ENCODE measurements at regions of chr1 and their contacts with region 1.

Region 1: DNA sequence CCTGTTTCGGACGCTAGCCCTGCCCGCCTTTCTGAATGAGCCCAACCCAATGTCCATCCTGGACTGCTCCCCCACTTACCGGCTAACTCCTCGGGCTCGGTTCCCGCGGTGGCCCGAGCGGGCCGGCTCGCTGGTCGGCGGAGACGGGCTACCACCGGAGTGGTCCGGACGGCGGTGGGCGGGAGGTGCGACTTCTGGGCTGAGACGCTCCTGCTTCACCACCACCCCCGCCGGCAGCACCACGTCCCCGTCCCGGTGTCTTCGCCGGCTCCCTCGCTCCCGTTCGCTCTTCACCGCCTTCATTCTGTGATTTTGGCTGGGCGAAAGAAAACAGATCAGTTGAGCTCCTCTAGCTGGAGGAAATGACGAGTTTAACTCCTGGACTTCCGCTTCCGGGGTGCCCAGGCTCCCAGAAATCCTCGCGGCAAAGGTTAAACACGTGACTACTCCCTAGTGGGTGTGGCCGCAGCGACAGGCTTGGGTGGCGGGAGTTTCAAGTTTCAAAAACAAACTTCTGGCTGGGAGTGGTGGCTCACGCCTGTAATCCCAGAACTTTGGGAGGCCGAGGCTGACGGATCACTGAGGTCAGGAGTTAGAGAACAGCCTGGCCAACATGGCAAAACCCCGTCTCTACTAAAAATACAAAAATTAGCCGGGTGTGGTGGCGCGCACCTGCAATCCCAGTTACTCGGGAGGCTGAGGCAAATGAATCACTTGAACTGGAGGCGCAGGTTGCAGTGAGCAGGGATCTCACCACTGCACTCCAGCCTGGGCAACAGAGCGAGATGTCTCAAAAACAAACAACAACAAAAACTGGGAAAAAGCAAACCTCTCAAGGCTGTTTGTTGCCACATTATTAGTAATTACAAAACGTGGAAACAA is at the start of gene SNIP1:
- DNase-seq: peak; percentile 97
- H3K4me3 ChIP-seq: peak within 1 kb of the TSS; percentile 85 to 96 (median 93)
- H3K27ac ChIP-seq: peak within 1 kb of the TSS; percentile 86 to 92 (median 90)
- H3K4me1 ChIP-seq: peaks cover 0 to 57% (median 31%) of the 10 kb centered on the region in 4 donors
- H3K27me3 ChIP-seq: no peaks in the 10 kb centered on the region
- CTCF ChIP-seq: no peak
- EP300 ChIP-seq: peak in 1 of 4 donors; percentile 42
- POLR2A ChIP-seq: peak; percentile 64 to 75
- total RNA-seq, gene SNIP1: 7.2 to 20.4 (median 12.8) TPM

Region 2: DNA sequence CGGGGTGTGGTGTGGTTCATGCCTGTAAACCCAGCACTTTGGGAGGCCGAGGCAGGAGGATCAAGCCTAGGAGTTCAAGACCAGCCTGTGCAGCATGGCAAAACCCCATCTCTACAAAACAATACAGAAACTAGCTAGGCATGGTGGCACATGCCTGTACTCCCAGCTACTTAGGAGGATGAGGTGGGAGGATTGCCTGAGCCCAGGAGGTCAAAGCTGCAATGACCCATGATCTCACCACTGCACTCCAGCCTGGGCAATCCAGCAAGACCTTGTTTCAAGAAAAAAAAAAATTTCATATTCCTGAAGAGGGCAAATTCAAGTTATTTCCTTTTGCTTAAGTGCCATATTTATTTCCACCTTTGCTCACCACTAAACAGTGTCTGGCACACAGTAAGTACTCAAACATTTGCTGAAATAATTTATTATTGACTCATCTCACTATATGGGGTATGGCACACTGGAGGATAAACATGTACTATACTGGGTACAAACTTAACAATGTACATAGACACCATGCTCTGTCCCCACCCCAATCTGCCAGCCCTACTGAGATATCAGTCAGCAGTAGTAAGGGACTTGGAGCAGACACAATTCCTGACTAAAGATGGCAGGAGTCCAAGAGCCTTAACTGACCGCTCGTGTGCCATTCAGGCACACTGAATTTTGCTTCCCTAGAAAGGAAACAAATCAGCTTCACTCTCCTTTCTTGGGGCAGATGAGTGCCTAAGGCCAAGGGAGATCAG is 55.1 kb before region 1 on chr1:
- intact Hi-C with region 1: loop called (anchors 5 kb)
- DNase-seq: no peak
- H3K4me3 ChIP-seq: no peak overlapping the region
- H3K27ac ChIP-seq: peak overlapping the region; percentile 39 to 81 (median 71)
- H3K4me1 ChIP-seq: peaks cover 0 to 38% (median 23%) of the 10 kb centered on the region in 4 donors
- H3K27me3 ChIP-seq: no peaks in the 10 kb centered on the region
- CTCF ChIP-seq: no peak
- EP300 ChIP-seq: no peak
- POLR2A ChIP-seq: no peak

Region 3: DNA sequence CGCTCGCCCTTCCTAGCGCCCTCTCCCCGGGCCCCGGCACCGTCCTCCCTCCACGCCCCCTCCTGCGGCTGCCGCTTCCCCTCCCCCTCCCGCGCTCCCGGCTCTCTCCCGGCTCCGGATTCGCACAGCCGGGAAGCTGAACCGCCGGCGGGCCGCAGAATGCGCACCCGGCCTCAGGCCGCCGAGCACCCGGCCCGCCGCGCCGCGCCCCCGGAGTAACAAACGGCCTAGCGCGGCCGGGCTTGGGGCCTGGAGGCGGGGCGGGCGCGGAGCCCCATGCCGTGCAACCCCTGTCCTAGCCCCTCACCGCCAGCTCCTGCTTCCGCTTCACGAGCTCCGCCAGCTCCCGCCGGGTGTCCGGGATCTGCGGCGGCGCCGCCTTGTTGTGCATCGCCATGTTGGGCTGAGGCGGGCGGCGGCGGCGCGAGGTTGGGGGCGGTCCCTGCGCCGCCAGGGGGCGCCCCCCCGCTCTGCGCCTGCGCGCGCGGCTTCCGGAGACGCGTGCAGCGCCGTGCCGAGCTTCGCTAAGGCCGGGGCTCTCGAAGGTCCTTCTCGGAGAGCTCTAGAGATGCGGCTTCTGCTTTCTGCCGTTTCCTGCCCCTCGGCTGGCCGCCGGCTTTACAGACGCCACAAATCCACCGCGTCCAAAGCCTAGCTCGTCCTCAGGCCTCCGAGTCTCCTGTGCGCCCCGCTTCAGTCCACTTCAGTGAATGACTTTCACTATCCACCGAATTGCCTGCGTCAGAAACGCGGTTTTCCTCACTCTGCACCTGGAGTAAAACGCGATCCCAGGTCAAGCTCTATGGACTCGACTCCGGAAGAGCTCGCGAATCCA is 39.6 kb before region 1 on chr1 and contains the start of gene MEAF6:
- intact Hi-C with region 1: loop called (anchors 5 kb)
- DNase-seq: peak; percentile 90
- H3K4me3 ChIP-seq: peak within 1 kb of the TSS; percentile 50 to 99 (median 84)
- H3K27ac ChIP-seq: peak within 1 kb of the TSS; percentile 92 to 98 (median 96)
- H3K4me1 ChIP-seq: peaks cover 0 to 32% (median 20%) of the 10 kb centered on the region in 4 donors
- H3K27me3 ChIP-seq: no peaks in the 10 kb centered on the region
- CTCF ChIP-seq: peak in 2 of 4 experiments; percentile 16 to 82
- EP300 ChIP-seq: no peak
- POLR2A ChIP-seq: peak; percentile 76 to 77
- total RNA-seq, gene MEAF6: 64.0 to 84.5 (median 79.9) TPM

Region 4: GRCh38 chr1:37595440-37596319 is 41.5 kb after region 1 on chr1 and contains the start of gene GNL2:
- intact Hi-C with region 1: loop called (anchors 2 kb)
- DNase-seq: peak; percentile 99
- H3K4me3 ChIP-seq: peak within 1 kb of the TSS; percentile 75 to 84 (median 80)
- H3K27ac ChIP-seq: peak within 1 kb of the TSS; percentile 83 to 85 (median 83)
- H3K4me1 ChIP-seq: peaks cover 0 to 27% (median 16%) of the 10 kb centered on the region in 4 donors
- H3K27me3 ChIP-seq: no peaks in the 10 kb centered on the region
- CTCF ChIP-seq: no peak
- EP300 ChIP-seq: peak in 1 of 4 donors; percentile 67
- POLR2A ChIP-seq: peak; percentile 68 to 79
- total RNA-seq, gene GNL2: 26.7 to 50.4 (median 29.6) TPM

Region 5: DNA sequence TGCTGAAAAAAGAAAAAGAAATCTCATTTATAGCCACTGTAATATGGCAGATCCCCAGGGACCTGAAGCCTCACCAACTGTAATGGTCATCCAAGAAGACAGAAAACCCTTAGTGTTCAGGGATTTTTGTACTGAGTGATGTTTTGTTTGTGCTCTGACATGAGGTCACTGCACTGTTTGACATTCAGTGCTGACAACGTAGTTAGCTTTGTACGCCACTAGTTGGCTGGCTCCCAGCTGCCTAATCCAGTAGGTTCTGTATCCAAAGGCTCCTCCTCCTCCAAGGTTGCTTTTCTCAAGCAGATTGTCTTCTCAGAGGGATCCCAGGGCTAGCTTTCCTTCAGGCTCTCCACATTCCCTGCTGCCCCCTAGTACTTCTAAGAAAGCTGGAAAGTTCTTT is 263.3 kb after region 1 on chr1:
- intact Hi-C with region 1: no loop called
- DNase-seq: no peak
- H3K4me3 ChIP-seq: no peak overlapping the region
- H3K27ac ChIP-seq: peak overlapping the region in 1 of 4 donors; percentile 72
- H3K4me1 ChIP-seq: no peaks in the 10 kb centered on the region
- H3K27me3 ChIP-seq: no peaks in the 10 kb centered on the region
- CTCF ChIP-seq: no peak
- EP300 ChIP-seq: no peak
- POLR2A ChIP-seq: no peak

Region 6: GRCh38 chr1:37859507-37860345 is 305.6 kb after region 1 on chr1 and contains the start of gene MTF1:
- intact Hi-C with region 1: no loop called
- DNase-seq: peak; percentile 99
- H3K4me3 ChIP-seq: peak within 1 kb of the TSS; percentile 76 to 96 (median 86)
- H3K27ac ChIP-seq: peak within 1 kb of the TSS; percentile 92 to 97 (median 96)
- H3K4me1 ChIP-seq: peaks cover 0 to 46% (median 42%) of the 10 kb centered on the region in 4 donors
- H3K27me3 ChIP-seq: no peaks in the 10 kb centered on the region
- CTCF ChIP-seq: peak; percentile 74 to 92 (median 86)
- EP300 ChIP-seq: no peak
- POLR2A ChIP-seq: peak; percentile 49 to 81
- total RNA-seq, gene MTF1: 3.9 to 6.6 (median 4.4) TPM

Measured in sigmoid colon (tissue), 7 donors.